ENCODE measurements at regions of chr5 and their contacts with region 1.

Region 1: GRCh38 chr5:76337953-76338451 is 65.1 kb upstream of the IQGAP2 start:
- DNase-seq: peak; percentile 47
- ATAC-seq: peak; percentile 80
- H3K4me3 Mint-ChIP-seq: no peak overlapping the region
- H3K27ac Mint-ChIP-seq: no peak overlapping the region
- H3K4me1 Mint-ChIP-seq: peaks cover 25% of the 10 kb centered on the region
- H3K27me3 Mint-ChIP-seq: no peaks in the 10 kb centered on the region

Region 2: DNA sequence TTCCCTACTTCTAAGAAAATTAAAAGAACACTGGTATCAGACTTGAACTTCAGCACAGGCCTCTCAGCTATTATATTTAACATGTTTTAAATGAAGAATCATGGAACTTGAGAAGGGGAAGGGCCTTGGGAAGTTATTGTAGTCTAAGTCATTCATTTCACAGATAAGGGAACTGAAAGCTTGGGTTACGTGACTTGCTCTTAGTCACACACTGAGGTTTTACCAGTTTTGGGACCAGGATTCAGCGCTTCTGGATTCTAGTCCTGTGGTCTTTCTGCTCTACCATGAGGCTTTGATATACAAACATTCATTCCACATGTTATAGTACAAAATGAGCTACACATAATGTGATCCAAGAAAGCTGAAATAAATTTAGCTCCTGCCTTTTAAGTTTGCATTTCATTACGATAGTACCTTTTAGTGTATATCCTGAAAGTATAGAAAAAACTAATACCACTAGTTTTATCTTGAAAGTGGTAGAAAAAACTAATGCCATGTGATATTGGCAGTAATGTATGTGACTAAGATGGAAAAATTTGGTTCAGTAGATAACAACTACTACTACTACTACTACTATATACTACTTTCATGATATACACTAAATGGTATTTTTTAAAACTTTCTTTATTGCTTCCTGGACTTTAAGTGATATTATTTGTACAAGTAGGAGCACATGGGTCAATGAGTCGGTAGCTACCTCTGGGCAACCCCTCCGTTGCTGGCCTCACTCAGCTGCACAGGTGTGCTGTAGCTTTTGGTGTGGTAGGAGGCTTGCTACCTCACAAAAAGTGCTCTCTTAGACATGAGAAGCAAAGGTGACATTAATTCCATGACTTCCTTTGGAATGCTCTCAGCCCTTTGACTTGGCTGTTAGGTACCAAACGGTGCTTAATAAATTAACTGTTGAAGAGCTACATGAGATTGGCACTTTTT is 244.5 kb after region 1 on chr5:
- CTCF ChIA-PET with region 1: interaction called, 3 read pairs
- POLR2A ChIA-PET with region 1: no interaction called
- intact Hi-C with region 1: loop called in 1 of 2 experiments (anchors 5 kb)
- DNase-seq: peak; percentile 52
- ATAC-seq: peak; percentile 93
- H3K4me3 Mint-ChIP-seq: no peak overlapping the region
- H3K27ac Mint-ChIP-seq: peak overlapping the region; percentile 60
- H3K4me1 Mint-ChIP-seq: peaks cover 20% of the 10 kb centered on the region
- H3K27me3 Mint-ChIP-seq: no peaks in the 10 kb centered on the region

Region 3: DNA sequence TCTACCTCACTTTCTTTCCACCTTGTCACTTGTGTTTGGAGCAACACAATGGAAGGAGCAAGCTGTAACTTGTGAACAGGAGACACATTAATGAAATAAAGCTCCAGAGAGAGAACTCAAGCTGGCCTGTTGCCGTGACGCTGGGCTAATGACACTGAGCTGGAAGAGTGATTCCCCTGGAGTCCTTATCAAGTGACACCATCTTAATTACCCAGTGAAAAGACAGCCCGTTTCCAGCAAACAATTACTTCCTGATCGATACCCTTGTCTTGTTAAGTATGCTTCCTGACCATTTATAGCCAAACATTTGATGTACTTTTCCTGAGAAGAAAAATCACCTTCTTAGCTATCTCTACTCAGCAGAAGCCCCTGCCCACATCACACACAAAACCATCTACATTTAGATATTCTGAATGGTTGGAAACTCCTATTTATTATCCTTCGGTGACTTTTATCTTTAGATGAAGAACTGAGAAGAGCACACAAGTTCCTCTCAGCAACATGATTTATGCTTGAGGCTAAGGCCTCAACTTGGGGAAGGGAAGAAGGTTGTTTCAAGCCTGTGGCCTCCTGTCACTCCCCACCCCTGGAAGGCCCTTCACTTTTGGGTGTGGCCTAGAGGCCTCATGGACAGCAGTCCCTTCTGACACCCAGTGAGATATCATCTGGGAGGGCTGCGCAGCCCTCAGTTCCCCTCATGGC is 649.0 kb after region 1 on chr5:
- CTCF ChIA-PET with region 1: no interaction called
- POLR2A ChIA-PET with region 1: no interaction called
- intact Hi-C with region 1: no loop called
- DNase-seq: no peak
- ATAC-seq: no peak
- H3K4me3 Mint-ChIP-seq: no peak overlapping the region
- H3K27ac Mint-ChIP-seq: no peak overlapping the region
- H3K4me1 Mint-ChIP-seq: no peaks in the 10 kb centered on the region
- H3K27me3 Mint-ChIP-seq: no peaks in the 10 kb centered on the region